PC-3 (cell line): ENCODE measurements at regions of chr3 and their contacts with region 1.

Region 1: GRCh38 chr3:57169872-57170623 is 4.9 kb upstream of the IL17RD start:
- DNase-seq: peak; percentile 81
- ATAC-seq: peak; percentile 86
- H3K4me3 ChIP-seq: peak overlapping the region; percentile 67
- H3K27ac ChIP-seq: no peak overlapping the region
- H3K4me1 ChIP-seq: peaks cover 5% of the 10 kb centered on the region; the same call in 1 of the 2 replicates
- H3K27me3 ChIP-seq: no peaks in the 10 kb centered on the region
- CTCF ChIP-seq: peak; percentile 96

Region 2: GRCh38 chr3:57007513-57008460 is 162.3 kb before region 1 on chr3:
- CTCF ChIA-PET with region 1: no interaction called
- POLR2A ChIA-PET with region 1: no interaction called
- intact Hi-C with region 1: loop called (anchors 2 kb)
- DNase-seq: peak; percentile 83
- ATAC-seq: peak; percentile 92
- H3K4me3 ChIP-seq: peak overlapping the region; percentile 45; the same call in 1 of the 2 replicates
- H3K27ac ChIP-seq: peak overlapping the region; percentile 90
- H3K4me1 ChIP-seq: peaks cover 30% of the 10 kb centered on the region
- H3K27me3 ChIP-seq: no peaks in the 10 kb centered on the region
- CTCF ChIP-seq: no peak

Region 3: DNA sequence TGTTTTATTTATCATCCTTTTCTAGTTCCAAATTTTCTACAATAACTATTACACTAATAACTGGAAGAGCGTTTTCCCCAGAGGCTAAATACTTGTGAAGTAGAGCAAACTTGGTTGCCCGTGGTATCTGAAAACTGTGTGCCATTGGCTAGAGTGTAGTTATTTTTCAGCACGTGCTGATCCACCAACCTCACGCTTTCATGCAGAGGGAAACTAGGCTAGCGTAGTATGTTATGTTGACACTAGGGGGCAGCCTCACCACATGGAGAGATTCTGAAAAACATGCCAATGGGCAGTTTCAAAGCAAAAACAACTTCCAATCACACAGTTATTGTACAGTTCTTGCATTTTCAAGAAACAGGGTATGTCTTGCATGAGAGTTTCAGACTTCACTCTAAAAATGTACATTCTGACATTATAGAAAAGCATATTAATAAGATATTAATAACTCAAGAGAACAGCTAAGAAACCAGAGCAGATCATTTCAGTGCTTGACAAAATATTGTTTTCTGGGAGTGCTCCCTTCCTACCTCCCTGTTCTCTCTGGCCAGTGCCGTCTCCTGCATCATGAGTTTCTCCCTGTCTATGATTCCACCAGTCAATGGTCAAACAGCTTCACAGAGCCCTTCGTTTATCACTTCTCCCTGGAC is 69.9 kb before region 1 on chr3:
- CTCF ChIA-PET with region 1: interaction called, 3 read pairs
- POLR2A ChIA-PET with region 1: no interaction called
- intact Hi-C with region 1: loop called (anchors 1 kb)
- DNase-seq: peak; percentile 91
- ATAC-seq: peak; percentile 76
- H3K4me3 ChIP-seq: no peak overlapping the region
- H3K27ac ChIP-seq: no peak overlapping the region
- H3K4me1 ChIP-seq: peaks cover 20% of the 10 kb centered on the region
- H3K27me3 ChIP-seq: no peaks in the 10 kb centered on the region
- CTCF ChIP-seq: peak; percentile 92

Region 4: DNA sequence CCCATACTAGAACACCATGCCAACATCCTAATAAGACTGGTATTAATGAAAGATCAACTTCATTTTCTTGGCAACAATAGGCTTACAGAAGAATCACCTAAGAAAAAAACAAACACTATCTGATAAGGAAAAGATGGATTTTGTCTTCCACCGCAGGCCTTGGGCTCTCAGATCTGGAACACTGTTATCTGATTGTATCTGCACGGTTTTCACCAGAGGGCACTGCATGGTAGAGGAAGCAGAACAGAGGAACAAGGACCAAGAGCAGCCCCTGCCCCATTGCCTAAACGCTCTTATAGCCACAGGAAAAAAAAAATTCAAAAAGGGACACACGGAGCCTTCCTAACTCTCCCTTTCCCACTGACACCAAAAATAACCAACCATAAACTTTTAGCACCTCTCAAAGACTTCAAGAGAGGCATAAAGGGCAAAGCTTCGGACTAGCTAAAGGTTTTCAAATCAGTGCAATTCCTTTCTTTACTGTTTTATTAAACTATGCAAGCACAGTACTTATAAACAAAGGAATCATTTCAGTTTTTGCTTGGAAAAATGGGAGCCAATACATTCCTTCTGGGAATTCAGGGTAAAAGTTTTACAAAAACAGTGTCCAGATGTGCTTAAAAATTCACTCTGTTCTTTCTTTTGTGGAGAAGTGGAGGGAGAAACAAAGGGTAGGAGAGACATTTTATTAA is 28.2 kb before region 1 on chr3:
- CTCF ChIA-PET with region 1: no interaction called
- POLR2A ChIA-PET with region 1: no interaction called
- intact Hi-C with region 1: no loop called
- DNase-seq: no peak
- ATAC-seq: no peak
- H3K4me3 ChIP-seq: no peak overlapping the region
- H3K27ac ChIP-seq: no peak overlapping the region
- H3K4me1 ChIP-seq: peaks cover under 1% of the 10 kb centered on the region; the same call in 1 of the 2 replicates
- H3K27me3 ChIP-seq: no peaks in the 10 kb centered on the region
- CTCF ChIP-seq: 0 out of 2 replicates have a peak, but pooled peaks have one; percentile 9

Region 5: GRCh38 chr3:57199895-57200297 is 29.8 kb after region 1 on chr3 and contains the start of gene HESX1:
- CTCF ChIA-PET with region 1: interaction called, 6 read pairs
- POLR2A ChIA-PET with region 1: interaction called, 18 read pairs
- intact Hi-C with region 1: no loop called
- DNase-seq: no peak
- ATAC-seq: no peak
- H3K4me3 ChIP-seq: no peak within 1 kb of the TSS
- H3K27ac ChIP-seq: no peak within 1 kb of the TSS
- H3K4me1 ChIP-seq: no peaks in the 10 kb centered on the region
- H3K27me3 ChIP-seq: no peaks in the 10 kb centered on the region
- CTCF ChIP-seq: no peak
- total RNA-seq, gene HESX1: 3.9 TPM in 1 of 2 replicates, not detected in the other

Region 6: DNA sequence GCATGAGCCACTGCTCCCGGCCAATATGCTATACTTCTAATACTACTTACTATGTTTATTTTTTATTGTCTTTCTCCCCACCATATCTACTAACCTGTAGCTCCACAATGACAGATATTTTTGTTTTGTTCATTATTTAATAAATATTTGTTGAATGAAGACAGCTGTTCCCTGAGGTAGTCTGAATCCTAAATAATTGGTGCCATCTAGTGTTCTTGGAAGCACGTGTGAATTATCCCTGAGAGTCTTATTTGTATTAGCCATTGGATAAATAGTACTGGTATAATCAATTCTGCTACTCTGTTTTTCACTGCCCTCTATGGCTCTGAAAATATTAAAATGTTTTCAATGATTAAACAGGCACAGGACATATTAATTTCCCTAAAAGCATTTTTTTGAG is 51.8 kb after region 1 on chr3:
- CTCF ChIA-PET with region 1: interaction called, 6 read pairs
- POLR2A ChIA-PET with region 1: no interaction called
- intact Hi-C with region 1: loop called (anchors 1 kb)
- DNase-seq: peak; percentile 62
- ATAC-seq: peak; percentile 82
- H3K4me3 ChIP-seq: no peak overlapping the region
- H3K27ac ChIP-seq: no peak overlapping the region
- H3K4me1 ChIP-seq: peaks cover 10% of the 10 kb centered on the region
- H3K27me3 ChIP-seq: no peaks in the 10 kb centered on the region
- CTCF ChIP-seq: peak; percentile 72

Region 7: GRCh38 chr3:57555738-57556458 is 385.9 kb after region 1 on chr3 and contains the start of gene PDE12:
- CTCF ChIA-PET with region 1: no interaction called
- POLR2A ChIA-PET with region 1: no interaction called
- intact Hi-C with region 1: loop called (anchors 5 kb)
- DNase-seq: peak; percentile 89
- ATAC-seq: peak; percentile 76
- H3K4me3 ChIP-seq: peak within 1 kb of the TSS; percentile 85
- H3K27ac ChIP-seq: peak within 1 kb of the TSS; percentile 75
- H3K4me1 ChIP-seq: peaks cover 32% of the 10 kb centered on the region
- H3K27me3 ChIP-seq: no peaks in the 10 kb centered on the region
- CTCF ChIP-seq: no peak
- total RNA-seq, gene PDE12: 25.3 and 32.3 TPM in 2 replicates

Region 8: DNA sequence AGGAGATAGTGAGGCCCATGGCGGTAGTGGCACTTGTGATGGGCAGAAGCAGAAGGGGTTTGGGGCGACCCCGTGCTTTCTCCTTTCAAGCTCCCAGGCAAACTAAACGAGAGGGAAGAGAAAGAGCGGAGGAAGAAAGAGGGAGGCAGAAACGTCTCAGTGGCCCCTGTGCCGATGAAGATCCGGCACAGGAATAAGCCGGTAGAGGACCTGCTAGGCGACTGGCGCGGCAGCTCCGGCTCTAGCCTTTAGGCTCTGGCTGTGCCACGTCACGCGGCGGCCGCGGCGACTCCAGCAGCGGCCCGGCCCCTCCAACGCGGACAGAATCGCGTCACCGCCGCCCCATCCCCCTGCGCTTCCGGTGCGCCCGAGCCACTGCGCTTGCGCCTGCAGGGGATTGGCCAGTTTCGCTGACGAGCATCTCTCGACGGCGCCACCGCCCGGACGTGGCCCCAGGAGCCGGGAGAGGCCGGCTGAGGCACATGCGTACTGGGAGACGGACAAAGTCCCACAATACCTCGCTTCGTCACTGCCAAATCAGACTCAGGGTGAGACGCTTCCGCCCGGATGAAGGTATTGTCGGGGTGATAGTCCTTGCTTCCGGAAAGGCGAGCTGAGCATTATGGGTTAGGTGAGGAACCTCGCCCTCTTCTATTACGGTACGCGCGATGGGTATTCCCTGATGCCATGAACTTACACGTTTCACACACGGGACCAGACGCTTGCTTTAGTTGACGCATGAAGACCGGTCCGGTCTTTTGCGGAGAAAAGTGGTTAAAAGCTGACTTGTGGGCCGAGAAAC is 427.3 kb after region 1 on chr3 and contains the start of gene ARF4:
- CTCF ChIA-PET with region 1: no interaction called
- POLR2A ChIA-PET with region 1: no interaction called
- intact Hi-C with region 1: loop called (anchors 10 kb)
- DNase-seq: peak; percentile 99
- ATAC-seq: peak; percentile 87
- H3K4me3 ChIP-seq: peak within 1 kb of the TSS; percentile 99
- H3K27ac ChIP-seq: peak within 1 kb of the TSS; percentile 93
- H3K4me1 ChIP-seq: peaks cover 28% of the 10 kb centered on the region
- H3K27me3 ChIP-seq: no peaks in the 10 kb centered on the region
- CTCF ChIP-seq: 0 out of 2 replicates have a peak, but pooled peaks have one; percentile 24
- total RNA-seq, gene ARF4: 130 and 135 TPM in 2 replicates